Activated CD4-positive, alpha-beta memory T cell treated with anti-CD3 and anti-CD28 coated beads for 36 hours (primary cell): ENCODE measurements at regions of chr6 and their contacts with region 1.

Region 1: GRCh38 chr6:29649701-29650673 is 6.9 kb upstream of the MOG start:
- DNase-seq: peak; percentile 98
- H3K4me3 Mint-ChIP-seq: peak overlapping the region; percentile 97
- H3K27ac Mint-ChIP-seq: peak overlapping the region; percentile 98
- H3K4me1 Mint-ChIP-seq: peaks cover 6% of the 10 kb centered on the region
- H3K27me3 Mint-ChIP-seq: no peaks in the 10 kb centered on the region

Region 2: GRCh38 chr6:29632789-29633533 is 17.0 kb before region 1 on chr6 and contains the start of gene GABBR1:
- CTCF ChIA-PET with region 1: interaction called, 150 read pairs
- POLR2A ChIA-PET with region 1: interaction called, 4 read pairs
- intact Hi-C with region 1: loop called (anchors 1 kb)
- DNase-seq: peak; percentile 84
- H3K4me3 Mint-ChIP-seq: peak within 1 kb of the TSS; percentile 79
- H3K27ac Mint-ChIP-seq: peak within 1 kb of the TSS; percentile 43
- H3K4me1 Mint-ChIP-seq: peaks cover 44% of the 10 kb centered on the region
- H3K27me3 Mint-ChIP-seq: peaks cover 2% of the 10 kb centered on the region
- total RNA-seq, gene GABBR1: 21.1 to 23.5 TPM

Region 3: DNA sequence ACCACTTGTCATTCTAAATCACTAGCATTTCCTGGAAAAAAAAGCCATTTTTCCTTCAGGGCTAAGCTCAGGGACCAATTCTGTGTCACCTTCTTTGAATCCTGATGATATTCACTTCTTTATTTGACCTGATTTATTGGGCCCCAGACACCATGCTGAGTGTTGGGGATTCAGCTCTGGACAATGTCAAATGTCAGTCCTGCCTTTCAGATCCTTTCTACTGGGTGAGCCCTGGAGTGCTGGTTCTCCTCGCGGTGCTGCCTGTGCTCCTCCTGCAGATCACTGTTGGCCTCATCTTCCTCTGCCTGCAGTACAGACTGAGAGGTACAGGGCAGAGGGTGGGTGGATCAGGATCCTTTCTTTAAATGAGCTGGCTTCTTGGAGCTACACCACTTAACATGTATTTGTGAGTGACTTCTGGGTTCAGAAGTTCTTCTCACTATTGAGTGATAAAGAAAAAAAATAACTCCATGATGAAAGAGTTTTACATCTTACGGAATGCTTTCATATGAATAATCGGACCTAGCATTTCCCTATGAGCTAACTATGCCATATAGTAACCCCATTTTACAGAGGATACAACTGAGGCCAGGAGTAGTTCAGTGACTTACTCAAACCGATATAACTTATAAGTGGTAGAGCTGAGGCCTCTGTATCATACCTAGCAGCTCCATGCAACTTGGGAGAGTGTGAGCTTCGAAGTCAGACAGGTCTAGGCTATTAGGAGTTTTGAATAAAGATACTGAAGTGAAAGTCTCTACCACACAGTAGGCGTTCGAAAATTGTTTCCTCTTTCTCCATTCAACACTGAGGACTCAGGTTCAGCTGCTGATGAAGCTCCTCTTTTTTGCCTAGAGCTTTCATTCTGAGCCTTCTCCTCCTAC is 16.2 kb after region 1 on chr6:
- CTCF ChIA-PET with region 1: interaction called, 61 read pairs
- POLR2A ChIA-PET with region 1: no interaction called
- intact Hi-C with region 1: no loop called
- DNase-seq: no peak
- H3K4me3 Mint-ChIP-seq: no peak overlapping the region
- H3K27ac Mint-ChIP-seq: no peak overlapping the region
- H3K4me1 Mint-ChIP-seq: no peaks in the 10 kb centered on the region
- H3K27me3 Mint-ChIP-seq: peaks cover 16% of the 10 kb centered on the region

Region 4: GRCh38 chr6:29685718-29686326 is 35.8 kb after region 1 on chr6:
- CTCF ChIA-PET with region 1: interaction called, 11 read pairs
- POLR2A ChIA-PET with region 1: no interaction called
- intact Hi-C with region 1: no loop called
- DNase-seq: no peak
- H3K4me3 Mint-ChIP-seq: no peak overlapping the region
- H3K27ac Mint-ChIP-seq: no peak overlapping the region
- H3K4me1 Mint-ChIP-seq: peaks cover 3% of the 10 kb centered on the region
- H3K27me3 Mint-ChIP-seq: peaks cover 4% of the 10 kb centered on the region

Region 5: GRCh38 chr6:29705389-29706231 is 55.6 kb after region 1 on chr6:
- CTCF ChIA-PET with region 1: interaction called, 14 read pairs
- POLR2A ChIA-PET with region 1: no interaction called
- intact Hi-C with region 1: loop called (anchors 5 kb)
- DNase-seq: no peak
- H3K4me3 Mint-ChIP-seq: peak overlapping the region; percentile 6
- H3K27ac Mint-ChIP-seq: no peak overlapping the region
- H3K4me1 Mint-ChIP-seq: peaks cover 50% of the 10 kb centered on the region
- H3K27me3 Mint-ChIP-seq: peaks cover 13% of the 10 kb centered on the region

Region 6: GRCh38 chr6:29834564-29835436 is 184.8 kb after region 1 on chr6:
- CTCF ChIA-PET with region 1: interaction called, 10 read pairs
- POLR2A ChIA-PET with region 1: no interaction called
- intact Hi-C with region 1: no loop called
- DNase-seq: peak; percentile 65
- H3K4me3 Mint-ChIP-seq: no peak overlapping the region
- H3K27ac Mint-ChIP-seq: no peak overlapping the region
- H3K4me1 Mint-ChIP-seq: no peaks in the 10 kb centered on the region
- H3K27me3 Mint-ChIP-seq: peaks cover 38% of the 10 kb centered on the region